ENCODE measurements at regions of chr1 and their contacts with region 1.

Region 1: GRCh38 chr1:154558575-154559465 is at the start of gene UBE2Q1:
- DNase-seq: peak; percentile 99
- H3K4me3 ChIP-seq: peak within 1 kb of the TSS; percentile 92
- H3K27ac ChIP-seq: peak within 1 kb of the TSS; percentile 67
- H3K4me1 ChIP-seq: peaks cover 26% of the 10 kb centered on the region
- H3K27me3 ChIP-seq: no peaks in the 10 kb centered on the region
- CTCF ChIP-seq: no peak
- POLR2A ChIP-seq: peak; percentile 57
- total RNA-seq, gene UBE2Q1: 85.4 and 97.2 TPM in 2 replicates

Region 2: GRCh38 chr1:154220071-154220969 is 338.5 kb before region 1 on chr1 and contains the start of gene UBAP2L:
- CTCF ChIA-PET with region 1: no interaction called
- POLR2A ChIA-PET with region 1: no interaction called
- dilution Hi-C with region 1: no loop called
- intact Hi-C with region 1: loop called (anchors 1 kb)
- DNase-seq: peak; percentile 100
- H3K4me3 ChIP-seq: peak within 1 kb of the TSS; percentile 65 to 93 (median 90)
- H3K27ac ChIP-seq: peak within 1 kb of the TSS; percentile 93
- H3K4me1 ChIP-seq: peaks cover 25% of the 10 kb centered on the region
- H3K27me3 ChIP-seq: no peaks in the 10 kb centered on the region
- CTCF ChIP-seq: no peak
- POLR2A ChIP-seq: peak; percentile 87
- total RNA-seq, gene UBAP2L: 229 and 235 TPM in 2 replicates

Region 3: DNA sequence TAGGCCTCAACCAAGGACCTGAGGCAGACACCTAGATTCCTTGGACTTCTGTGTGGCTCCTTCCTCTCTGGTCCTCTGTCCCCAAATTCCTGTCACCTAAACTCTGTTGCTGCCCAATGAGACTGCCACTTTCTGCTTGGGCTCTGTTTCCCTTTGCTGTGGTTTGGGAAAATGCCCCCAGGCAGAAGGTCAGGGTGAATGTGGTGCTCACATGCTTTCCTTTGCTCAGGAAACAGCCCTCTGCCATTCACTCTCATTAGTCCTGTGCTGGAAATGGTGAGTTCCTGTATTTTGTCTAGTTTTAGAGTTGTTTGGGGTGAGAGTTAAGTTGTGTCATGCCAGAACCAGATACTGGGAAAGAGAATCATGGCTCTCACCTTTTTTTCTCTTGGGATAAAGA is 33.9 kb before region 1 on chr1:
- CTCF ChIA-PET with region 1: no interaction called
- POLR2A ChIA-PET with region 1: no interaction called
- dilution Hi-C with region 1: no loop called
- intact Hi-C with region 1: no loop called
- DNase-seq: peak; percentile 66
- H3K4me3 ChIP-seq: no peak overlapping the region
- H3K27ac ChIP-seq: no peak overlapping the region
- H3K4me1 ChIP-seq: peaks cover 16% of the 10 kb centered on the region
- H3K27me3 ChIP-seq: no peaks in the 10 kb centered on the region
- CTCF ChIP-seq: no peak
- POLR2A ChIP-seq: no peak

Region 4: GRCh38 chr1:154546264-154547063 is 12.4 kb before region 1 on chr1:
- CTCF ChIA-PET with region 1: interaction called, 19 read pairs
- POLR2A ChIA-PET with region 1: no interaction called
- dilution Hi-C with region 1: no loop called
- intact Hi-C with region 1: no loop called
- DNase-seq: peak; percentile 73
- H3K4me3 ChIP-seq: no peak overlapping the region
- H3K27ac ChIP-seq: no peak overlapping the region
- H3K4me1 ChIP-seq: peaks cover 6% of the 10 kb centered on the region
- H3K27me3 ChIP-seq: no peaks in the 10 kb centered on the region
- CTCF ChIP-seq: peak; percentile 74 to 88
- POLR2A ChIP-seq: no peak

Region 5: GRCh38 chr1:154669464-154670282 is 110.9 kb after region 1 on chr1:
- CTCF ChIA-PET with region 1: interaction called, 29 read pairs
- POLR2A ChIA-PET with region 1: no interaction called
- dilution Hi-C with region 1: no loop called
- intact Hi-C with region 1: loop called (anchors 1 kb)
- DNase-seq: peak; percentile 88
- H3K4me3 ChIP-seq: no peak overlapping the region
- H3K27ac ChIP-seq: no peak overlapping the region
- H3K4me1 ChIP-seq: no peaks in the 10 kb centered on the region
- H3K27me3 ChIP-seq: no peaks in the 10 kb centered on the region
- CTCF ChIP-seq: peak; percentile 76 to 82
- POLR2A ChIP-seq: no peak

Region 6: GRCh38 chr1:154847891-154848290 is 289.1 kb after region 1 on chr1:
- CTCF ChIA-PET with region 1: no interaction called
- POLR2A ChIA-PET with region 1: no interaction called
- dilution Hi-C with region 1: no loop called
- intact Hi-C with region 1: no loop called
- DNase-seq: no peak
- H3K4me3 ChIP-seq: no peak overlapping the region
- H3K27ac ChIP-seq: no peak overlapping the region
- H3K4me1 ChIP-seq: no peaks in the 10 kb centered on the region
- H3K27me3 ChIP-seq: peaks cover 3 to 8% of the 10 kb centered on the region in 2 experiments
- CTCF ChIP-seq: no peak
- POLR2A ChIP-seq: no peak

Region 7: GRCh38 chr1:154878371-154879022 is 319.7 kb after region 1 on chr1:
- CTCF ChIA-PET with region 1: interaction called, 51 read pairs
- POLR2A ChIA-PET with region 1: no interaction called
- dilution Hi-C with region 1: no loop called
- intact Hi-C with region 1: loop called (anchors 1 kb)
- DNase-seq: peak; percentile 72
- H3K4me3 ChIP-seq: no peak overlapping the region
- H3K27ac ChIP-seq: no peak overlapping the region
- H3K4me1 ChIP-seq: peaks cover 9% of the 10 kb centered on the region
- H3K27me3 ChIP-seq: no peaks in the 10 kb centered on the region
- CTCF ChIP-seq: peak; percentile 86 to 94
- POLR2A ChIP-seq: no peak

Region 8: GRCh38 chr1:155001675-155002463 is 443.0 kb after region 1 on chr1:
- CTCF ChIA-PET with region 1: interaction called, 7 read pairs
- POLR2A ChIA-PET with region 1: no interaction called
- dilution Hi-C with region 1: no loop called
- intact Hi-C with region 1: loop called (anchors 5 kb)
- DNase-seq: peak; percentile 99
- H3K4me3 ChIP-seq: peak overlapping the region; percentile 57 to 94 (median 61)
- H3K27ac ChIP-seq: peak overlapping the region; percentile 26
- H3K4me1 ChIP-seq: peaks cover 25% of the 10 kb centered on the region
- H3K27me3 ChIP-seq: no peaks in the 10 kb centered on the region
- CTCF ChIP-seq: peak; percentile 12 to 63
- POLR2A ChIP-seq: no peak